Posterior vena cava (tissue), 2 donors: ENCODE measurements at regions of chr12 and their contacts with region 1.

Region 1: GRCh38 chr12:52582971-52583456 is 9.4 kb upstream of the KRT74 start:
- DNase-seq: no peak

Region 2: DNA sequence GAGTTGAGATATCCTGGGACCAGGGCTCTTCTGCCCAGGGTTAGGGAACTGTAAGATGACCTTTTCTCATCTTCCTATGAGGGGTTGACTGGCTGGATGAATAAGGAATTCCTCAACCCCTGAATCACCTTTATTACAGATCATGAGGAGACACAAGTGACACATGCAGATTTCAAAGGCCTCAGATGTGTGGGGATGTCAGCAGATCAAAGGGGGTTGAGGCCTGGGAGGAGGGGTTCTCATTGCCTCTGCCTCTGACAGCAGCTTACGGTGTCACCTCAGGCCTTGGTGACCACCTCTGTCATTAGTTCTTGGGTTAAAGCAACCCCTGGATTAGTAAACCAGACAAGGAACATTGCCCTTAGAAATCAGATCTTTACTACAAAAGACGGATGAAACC is 20.3 kb after region 1 on chr12:
- intact Hi-C with region 1: no loop called
- DNase-seq: no peak

Region 3: GRCh38 chr12:52633383-52633782 is 50.4 kb after region 1 on chr12:
- intact Hi-C with region 1: no loop called
- DNase-seq: no peak

Region 4: GRCh38 chr12:52870351-52871290 is 287.6 kb after region 1 on chr12:
- intact Hi-C with region 1: loop called (anchors 2 to 5 kb)
- DNase-seq: peak; percentile 87

Region 5: DNA sequence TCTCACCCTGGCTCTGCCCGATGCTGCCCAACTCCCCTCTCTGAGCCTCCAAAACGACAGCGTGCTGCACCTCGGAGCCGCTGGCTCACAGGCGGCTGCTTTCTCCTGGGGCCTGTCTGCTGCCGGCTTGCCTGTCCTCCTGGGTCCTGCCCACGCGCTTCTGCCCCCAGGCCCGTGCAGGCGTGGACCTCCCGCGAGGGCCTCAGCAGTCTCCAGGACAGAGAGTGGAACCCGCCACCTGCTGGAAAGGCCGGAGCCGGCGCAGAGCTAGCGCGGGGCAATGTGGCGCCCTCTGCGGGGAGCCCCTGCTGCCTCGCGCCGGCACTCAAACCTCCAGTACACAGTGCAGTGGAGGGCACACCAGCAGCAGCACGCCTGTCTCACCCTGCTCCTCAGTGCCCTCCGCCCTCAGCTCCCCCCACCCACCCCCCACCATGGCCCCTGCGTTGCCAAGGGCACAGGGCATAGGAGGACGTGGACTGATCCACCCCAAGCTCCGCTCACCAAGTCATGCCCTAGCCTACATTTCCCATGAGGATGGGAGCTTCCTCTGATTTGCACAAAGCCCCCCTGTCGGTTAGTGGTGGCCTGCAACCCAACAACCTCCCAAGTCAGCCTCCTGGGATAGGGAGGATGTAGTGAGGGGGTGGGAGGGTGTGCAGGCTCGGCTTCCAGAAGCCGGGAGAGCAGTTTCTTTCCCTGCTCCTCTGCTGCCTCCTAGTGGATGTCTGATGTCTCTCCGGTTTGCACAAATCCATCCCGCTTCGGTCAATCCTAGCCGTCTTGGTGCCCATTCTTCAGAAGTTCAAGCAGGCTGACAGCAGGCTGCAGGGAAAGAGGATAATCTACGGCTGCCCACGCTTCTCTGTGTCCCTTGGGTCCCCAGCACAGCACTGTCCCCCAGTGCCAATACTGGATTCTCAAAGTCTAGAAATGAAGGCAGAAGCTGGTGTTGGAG is 296.7 kb after region 1 on chr12:
- intact Hi-C with region 1: loop called in 1 of 2 experiments (anchors 5 kb)
- DNase-seq: peak; percentile 92

Region 6: DNA sequence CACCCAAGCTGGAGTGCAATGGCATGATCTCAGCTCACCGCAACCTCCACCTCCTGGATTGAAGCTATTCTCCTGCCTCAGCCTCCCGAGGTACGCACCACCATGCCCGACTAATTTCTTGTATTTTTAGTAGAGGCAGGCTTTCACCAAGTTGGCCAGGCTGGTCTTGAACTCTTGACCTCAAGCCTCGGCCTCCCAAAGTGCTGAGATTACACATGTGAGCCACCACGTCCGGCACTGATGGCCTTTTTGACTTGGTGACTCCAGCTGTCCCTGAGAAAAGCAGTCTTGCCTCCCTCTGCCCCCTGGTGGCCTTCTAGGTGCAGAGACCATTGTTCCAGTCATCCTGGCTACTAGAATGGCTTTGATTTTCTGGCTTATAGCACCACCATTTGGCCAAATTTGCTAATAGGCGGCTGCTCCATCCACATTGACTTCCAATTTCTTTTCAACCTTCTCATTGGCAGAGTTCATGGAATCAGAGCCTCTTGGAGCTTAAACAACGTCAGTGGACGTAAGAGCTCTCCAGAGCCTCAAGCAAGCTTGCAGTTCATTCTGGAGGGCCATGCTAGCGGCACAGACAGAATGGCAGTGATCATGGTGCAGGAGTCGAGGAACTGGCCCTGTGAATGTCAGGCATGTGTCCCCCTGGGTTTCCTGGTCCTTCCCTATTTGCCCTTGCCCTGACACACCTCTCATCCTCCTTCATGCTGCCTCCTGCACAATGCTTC is 397.8 kb after region 1 on chr12:
- intact Hi-C with region 1: loop called in 1 of 2 experiments (anchors 10 kb)
- DNase-seq: peak; percentile 94